K562 (cell line): ENCODE measurements at regions of chr4 and their contacts with region 1.

Region 1: DNA sequence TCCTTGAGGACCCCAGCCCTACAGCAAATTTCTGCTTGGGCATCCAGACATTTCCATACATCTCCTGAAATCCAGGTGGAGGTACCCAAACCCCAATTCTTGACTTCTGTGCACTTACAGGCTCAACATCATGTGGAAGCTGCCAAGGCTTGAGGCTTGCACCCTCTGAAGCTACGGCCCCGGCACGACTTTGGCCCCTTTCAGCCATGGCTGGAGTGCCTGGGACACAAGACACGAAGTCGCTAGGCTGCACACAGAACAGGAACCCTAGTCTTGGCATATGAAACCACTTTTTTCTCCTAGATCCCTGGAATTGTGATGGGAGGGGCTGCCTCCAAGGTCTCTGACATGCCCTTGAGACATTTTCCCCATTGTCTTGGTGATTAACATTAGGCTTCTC is 1417.7 kb downstream of the ARAP2 start:
- DNase-seq: no peak
- ATAC-seq: no peak
- H3K4me3 ChIP-seq: no peak overlapping the region
- H3K27ac ChIP-seq: no peak overlapping the region
- H3K4me1 ChIP-seq: no peaks in the 10 kb centered on the region
- H3K27me3 ChIP-seq: no peaks in the 10 kb centered on the region
- CTCF ChIP-seq: no peak
- EP300 ChIP-seq: no peak
- POLR2A ChIP-seq: no peak
- RAD21 ChIP-seq: no peak

Region 2: GRCh38 chr4:34771632-34772031 is 55.0 kb before region 1 on chr4:
- CTCF ChIA-PET with region 1: no interaction called
- POLR2A ChIA-PET with region 1: no interaction called
- in situ Hi-C with region 1: loop called (anchors 5 kb)
- intact Hi-C with region 1: no loop called
- DNase-seq: no peak
- ATAC-seq: no peak
- H3K4me3 ChIP-seq: no peak overlapping the region
- H3K27ac ChIP-seq: no peak overlapping the region
- H3K4me1 ChIP-seq: no peaks in the 10 kb centered on the region
- H3K27me3 ChIP-seq: no peaks in the 10 kb centered on the region
- CTCF ChIP-seq: no peak
- EP300 ChIP-seq: no peak
- POLR2A ChIP-seq: no peak
- RAD21 ChIP-seq: no peak